Cardiac septum (tissue), 1 donor: ENCODE measurements at regions of chr15 and their contacts with region 1.

Region 1: DNA sequence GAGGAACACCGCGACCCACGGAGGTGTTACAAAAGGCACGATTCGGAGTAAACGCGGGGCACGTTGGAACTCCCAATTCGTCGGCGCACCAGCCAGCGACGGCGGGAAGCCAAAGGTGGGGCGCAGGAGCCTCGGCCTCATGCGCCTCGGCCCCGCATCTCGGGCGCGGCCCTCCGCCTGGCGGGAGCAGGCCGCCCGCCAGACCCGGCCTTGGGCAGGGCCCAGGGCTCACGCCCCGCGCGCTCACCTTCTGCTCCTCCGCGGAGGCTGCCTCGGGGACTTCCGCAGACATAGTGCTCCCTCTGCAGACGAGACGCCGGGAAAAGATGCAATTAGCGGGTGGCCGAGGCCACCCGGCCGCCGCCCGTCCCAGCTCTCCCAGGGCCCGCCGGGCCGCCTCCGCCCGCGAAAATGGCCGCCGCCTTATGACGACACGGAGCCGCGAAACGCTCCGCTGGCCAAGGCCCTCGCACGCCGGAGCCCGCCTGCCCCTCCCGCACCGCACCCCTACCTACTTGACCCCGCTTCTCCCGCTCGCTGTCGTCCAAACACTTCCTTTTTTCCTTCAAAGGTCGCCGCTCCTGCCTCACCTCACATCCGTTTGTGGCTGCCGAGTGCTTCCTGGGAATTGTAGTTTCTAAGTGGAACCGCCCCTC is at the start of gene ARPP19:
- DNase-seq: peak; percentile 95
- total RNA-seq, gene ARPP19: 131 TPM

Region 2: DNA sequence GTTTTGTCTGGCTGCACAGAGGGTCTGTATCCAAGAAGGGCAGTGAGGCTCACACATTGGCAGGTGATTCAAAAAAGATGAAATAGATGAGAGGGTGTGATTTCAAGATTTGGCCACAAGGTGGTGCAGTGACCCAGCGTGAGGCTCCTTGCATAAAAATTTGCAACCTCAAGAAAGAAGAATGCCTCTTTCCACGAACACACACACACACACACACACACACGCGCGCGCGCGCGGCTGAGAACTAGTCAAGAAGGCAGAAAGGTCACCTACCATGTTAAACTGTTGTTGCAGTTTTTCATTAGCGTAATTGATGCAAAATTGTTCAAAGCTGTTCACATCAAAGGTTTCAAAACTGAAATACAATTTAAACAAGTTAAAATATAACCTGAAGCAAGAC is 312.4 kb before region 1 on chr15:
- intact Hi-C with region 1: loop called (anchors 2 kb)
- DNase-seq: no peak

Region 3: DNA sequence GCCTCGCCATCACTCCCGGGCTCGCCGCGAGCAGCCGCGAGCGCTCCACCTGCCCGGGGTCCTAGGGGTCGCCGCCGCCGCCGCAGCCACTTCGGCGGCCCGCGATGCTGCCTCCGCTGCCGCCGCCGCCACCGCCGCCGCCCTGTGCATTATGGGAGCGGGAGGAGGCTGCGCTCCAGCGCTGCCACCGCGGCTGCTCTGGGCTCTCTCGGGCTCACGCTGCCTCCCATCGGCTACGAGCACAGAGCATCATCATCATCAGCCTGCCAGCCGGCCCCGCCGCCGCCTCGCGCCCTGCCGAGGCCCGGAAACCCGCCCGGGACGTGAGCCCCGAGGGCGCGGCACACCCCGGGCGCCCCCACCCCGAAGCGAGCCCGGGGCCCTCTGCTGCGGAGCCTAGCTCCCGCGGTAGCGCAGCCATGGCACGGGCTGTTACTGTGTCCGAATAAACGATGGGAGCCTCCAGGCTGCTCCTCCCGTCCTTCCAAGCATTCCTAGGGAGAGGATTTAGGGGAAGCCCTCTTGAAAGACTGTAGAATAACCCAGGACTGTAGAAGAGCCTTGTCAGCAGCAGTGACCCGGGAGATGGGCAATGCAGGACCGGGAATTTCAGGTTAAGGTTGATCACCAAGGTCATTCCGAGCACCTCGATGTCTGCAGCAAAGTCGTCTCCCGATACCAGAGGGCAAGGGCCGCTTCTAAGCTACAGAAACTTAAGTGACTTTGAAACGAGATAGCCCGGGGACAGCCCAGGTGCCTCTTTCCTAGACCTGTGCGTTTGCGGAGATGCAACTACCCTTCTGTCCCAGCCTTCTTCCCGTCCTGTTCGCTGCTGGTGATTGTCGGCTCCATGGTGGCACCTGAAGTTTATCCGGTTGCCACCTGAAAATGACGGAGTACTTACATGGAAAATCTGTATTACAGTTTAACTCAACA is 39.5 kb before region 1 on chr15:
- intact Hi-C with region 1: loop called (anchors 5 kb)
- DNase-seq: peak; percentile 85

Region 4: GRCh38 chr15:52679232-52680040 is 110.7 kb after region 1 on chr15 and contains the start of gene ATOSA:
- intact Hi-C with region 1: loop called (anchors 2 kb)
- DNase-seq: peak; percentile 98
- total RNA-seq, gene ATOSA: 31.5 TPM